Aorta (tissue), 5 donors: ENCODE measurements at regions of chr3 and their contacts with region 1.

Region 1: GRCh38 chr3:188807006-188807405 is 364.8 kb upstream of the TPRG1 start:
- DNase-seq: no peak
- ATAC-seq: no peak
- H3K4me3 ChIP-seq: no peak overlapping the region
- H3K27ac ChIP-seq: no peak overlapping the region
- H3K4me1 ChIP-seq: no peaks in the 10 kb centered on the region
- H3K27me3 ChIP-seq: no peaks in the 10 kb centered on the region

Region 2: GRCh38 chr3:188827576-188827975 is 20.6 kb after region 1 on chr3:
- intact Hi-C with region 1: loop called in 1 of 2 experiments (anchors 2 kb)
- DNase-seq: no peak
- ATAC-seq: no peak
- H3K4me3 ChIP-seq: no peak overlapping the region
- H3K27ac ChIP-seq: no peak overlapping the region
- H3K4me1 ChIP-seq: peaks cover 1 to 10% of the 10 kb centered on the region in 2 donors
- H3K27me3 ChIP-seq: no peaks in the 10 kb centered on the region